CD8-positive, alpha-beta T cell (primary cell): ENCODE measurements at regions of chr11 and their contacts with region 1.

Region 1: DNA sequence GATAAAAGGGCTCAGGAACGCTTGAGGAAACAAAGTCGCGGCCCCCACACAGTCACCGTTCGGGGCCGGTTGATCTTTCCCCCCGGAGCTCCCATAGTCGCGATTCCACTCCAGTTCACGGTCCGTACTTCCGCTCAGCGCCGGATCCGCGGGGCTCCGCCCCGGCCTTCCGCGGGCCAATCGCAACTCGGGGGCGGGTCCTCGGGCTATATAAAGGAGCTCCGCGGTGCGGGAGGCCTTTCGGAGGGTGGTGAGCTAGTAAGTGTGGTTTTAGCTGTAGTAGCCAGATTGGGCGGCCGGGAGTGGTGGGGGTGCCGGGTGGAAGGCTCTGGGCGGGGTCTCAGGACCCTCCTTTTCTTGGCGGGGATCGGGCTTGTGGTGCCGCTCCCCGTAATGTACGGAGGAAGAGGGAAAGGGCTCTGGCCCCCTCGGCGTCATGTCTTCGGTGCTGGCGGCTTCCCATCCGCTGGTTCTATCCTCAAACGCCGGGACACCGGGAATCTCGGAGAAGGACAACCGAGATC is at the starts of genes C11orf98 and CSKMT:
- DNase-seq: peak; percentile 92 to 98 (median 95)
- ATAC-seq: peak; percentile 87
- H3K4me3 ChIP-seq: peak within 1 kb of the TSS; percentile 95 to 97
- H3K4me3 Mint-ChIP-seq: peak within 1 kb of the TSS; percentile 96
- H3K27ac ChIP-seq: peak within 1 kb of the TSS; percentile 81 to 92
- H3K27ac Mint-ChIP-seq: peak within 1 kb of the TSS; percentile 93
- H3K4me1 ChIP-seq: peaks cover 31% of the 10 kb centered on the region
- H3K4me1 Mint-ChIP-seq: peaks cover 45% of the 10 kb centered on the region
- H3K27me3 ChIP-seq: no peaks in the 10 kb centered on the region
- H3K27me3 Mint-ChIP-seq: no peaks in the 10 kb centered on the region
- CTCF ChIP-seq: no peak
- total RNA-seq, gene C11orf98: 22.5 to 25.7 TPM
- total RNA-seq, gene CSKMT: 25.4 to 25.7 TPM

Region 2: DNA sequence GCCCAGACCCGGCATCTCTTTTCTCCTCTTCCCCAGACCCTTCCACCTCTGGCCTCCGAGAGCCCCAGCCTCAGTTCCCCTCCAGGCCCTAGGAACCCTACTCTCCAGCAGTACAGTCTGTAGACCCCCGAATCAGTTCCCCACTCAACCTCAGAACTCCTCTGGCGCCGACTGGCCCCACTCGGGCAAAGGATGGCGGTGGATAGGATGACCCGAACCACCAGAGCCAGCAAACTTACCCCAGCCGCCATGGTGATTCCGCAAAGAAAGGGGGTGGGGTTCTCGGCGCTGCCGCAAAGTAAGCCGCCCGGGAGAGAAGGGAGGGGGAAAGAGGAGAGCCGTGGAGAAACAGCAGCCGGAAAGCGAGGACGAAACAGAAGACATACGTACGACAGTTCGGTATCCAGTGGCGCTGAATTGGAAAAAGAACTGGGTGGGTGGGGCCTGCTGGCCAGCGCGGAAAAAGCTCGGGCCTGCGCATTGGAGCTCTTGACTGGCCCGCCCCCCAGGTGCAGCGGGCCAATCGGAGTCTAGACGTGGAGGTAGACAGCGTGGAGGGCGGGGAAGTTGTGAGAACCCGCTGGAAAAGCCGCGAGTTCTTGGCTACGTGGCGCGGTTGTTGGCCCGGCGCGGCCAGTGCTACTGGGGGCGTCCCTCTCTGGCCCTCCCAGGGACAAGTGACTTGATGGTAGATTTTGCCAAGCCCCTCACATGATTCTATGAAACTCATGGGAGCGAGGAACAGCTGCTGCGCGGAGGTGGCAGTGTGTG is 91.4 kb before region 1 on chr11 and contains the start of gene EEF1G:
- CTCF ChIA-PET with region 1: no interaction called
- POLR2A ChIA-PET with region 1: interaction called, 15 read pairs
- intact Hi-C with region 1: loop called in 1 of 2 experiments (anchors 5 kb)
- DNase-seq: peak; percentile 95 to 100 (median 97)
- ATAC-seq: peak; percentile 94
- H3K4me3 ChIP-seq: peak within 1 kb of the TSS; percentile 97 to 99
- H3K4me3 Mint-ChIP-seq: peak within 1 kb of the TSS; percentile 97
- H3K27ac ChIP-seq: peak within 1 kb of the TSS; percentile 85
- H3K27ac Mint-ChIP-seq: peak within 1 kb of the TSS; percentile 90
- H3K4me1 ChIP-seq: peaks cover 28% of the 10 kb centered on the region
- H3K4me1 Mint-ChIP-seq: peaks cover 55% of the 10 kb centered on the region
- H3K27me3 ChIP-seq: no peaks in the 10 kb centered on the region
- H3K27me3 Mint-ChIP-seq: no peaks in the 10 kb centered on the region
- CTCF ChIP-seq: no peak
- total RNA-seq, gene EEF1G: 2,174 to 2,204 TPM

Region 3: DNA sequence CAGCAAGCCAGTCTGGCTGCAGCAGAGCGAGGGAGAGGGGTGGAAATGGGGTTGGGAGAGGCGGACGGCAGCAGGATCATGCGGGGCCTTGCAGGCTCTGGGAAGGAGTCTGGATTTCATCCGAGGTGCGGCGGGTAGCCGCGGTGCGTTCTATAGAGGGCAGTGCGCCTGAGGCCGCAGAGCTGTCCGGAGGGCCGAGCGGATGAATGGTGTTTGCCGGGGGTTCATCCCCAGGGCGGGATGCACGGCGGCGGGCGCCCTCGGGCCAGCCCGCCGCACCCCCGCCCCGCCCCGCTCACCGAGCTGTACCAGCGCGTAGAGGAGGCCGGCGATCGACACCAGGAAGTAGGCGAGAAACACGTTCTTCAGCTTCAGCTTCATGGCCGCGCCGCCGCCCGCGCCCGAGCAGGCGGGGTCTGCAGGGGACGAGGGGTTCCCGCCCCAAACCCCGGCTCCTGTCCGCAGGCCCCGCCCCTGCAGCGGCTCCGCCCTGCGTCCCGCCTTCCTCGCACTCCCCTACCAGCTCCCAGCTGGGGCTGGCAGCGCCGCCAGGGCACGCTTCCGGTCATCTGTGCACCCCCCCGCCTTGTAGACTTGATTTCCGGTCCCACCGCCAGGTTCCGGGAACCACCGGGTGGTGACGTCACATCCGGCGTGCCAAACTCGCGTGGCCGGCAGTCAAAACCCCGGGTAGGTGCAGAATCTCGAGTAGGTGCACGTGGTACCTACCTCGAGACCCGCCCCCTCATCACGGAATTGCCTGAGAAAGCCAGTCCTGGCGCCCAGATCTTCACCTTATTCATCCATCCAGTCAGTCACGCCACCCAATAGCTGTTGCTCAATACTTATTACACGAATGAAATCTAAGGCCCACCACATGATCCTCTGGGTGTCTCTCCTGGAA is 43.3 kb before region 1 on chr11 and contains the start of gene B3GAT3:
- CTCF ChIA-PET with region 1: interaction called, 3 read pairs
- POLR2A ChIA-PET with region 1: interaction called, 39 read pairs
- intact Hi-C with region 1: loop called (anchors 1 kb)
- DNase-seq: peak; percentile 90 to 99 (median 97)
- ATAC-seq: peak; percentile 81
- H3K4me3 ChIP-seq: peak within 1 kb of the TSS; percentile 69 to 80
- H3K4me3 Mint-ChIP-seq: peak within 1 kb of the TSS; percentile 98
- H3K27ac ChIP-seq: peak within 1 kb of the TSS; percentile 78 to 88
- H3K27ac Mint-ChIP-seq: peak within 1 kb of the TSS; percentile 97
- H3K4me1 ChIP-seq: peaks cover 20% of the 10 kb centered on the region
- H3K4me1 Mint-ChIP-seq: peaks cover 30% of the 10 kb centered on the region
- H3K27me3 ChIP-seq: no peaks in the 10 kb centered on the region
- H3K27me3 Mint-ChIP-seq: no peaks in the 10 kb centered on the region
- CTCF ChIP-seq: no peak
- total RNA-seq, gene B3GAT3: 41.7 to 44.0 TPM

Region 4: DNA sequence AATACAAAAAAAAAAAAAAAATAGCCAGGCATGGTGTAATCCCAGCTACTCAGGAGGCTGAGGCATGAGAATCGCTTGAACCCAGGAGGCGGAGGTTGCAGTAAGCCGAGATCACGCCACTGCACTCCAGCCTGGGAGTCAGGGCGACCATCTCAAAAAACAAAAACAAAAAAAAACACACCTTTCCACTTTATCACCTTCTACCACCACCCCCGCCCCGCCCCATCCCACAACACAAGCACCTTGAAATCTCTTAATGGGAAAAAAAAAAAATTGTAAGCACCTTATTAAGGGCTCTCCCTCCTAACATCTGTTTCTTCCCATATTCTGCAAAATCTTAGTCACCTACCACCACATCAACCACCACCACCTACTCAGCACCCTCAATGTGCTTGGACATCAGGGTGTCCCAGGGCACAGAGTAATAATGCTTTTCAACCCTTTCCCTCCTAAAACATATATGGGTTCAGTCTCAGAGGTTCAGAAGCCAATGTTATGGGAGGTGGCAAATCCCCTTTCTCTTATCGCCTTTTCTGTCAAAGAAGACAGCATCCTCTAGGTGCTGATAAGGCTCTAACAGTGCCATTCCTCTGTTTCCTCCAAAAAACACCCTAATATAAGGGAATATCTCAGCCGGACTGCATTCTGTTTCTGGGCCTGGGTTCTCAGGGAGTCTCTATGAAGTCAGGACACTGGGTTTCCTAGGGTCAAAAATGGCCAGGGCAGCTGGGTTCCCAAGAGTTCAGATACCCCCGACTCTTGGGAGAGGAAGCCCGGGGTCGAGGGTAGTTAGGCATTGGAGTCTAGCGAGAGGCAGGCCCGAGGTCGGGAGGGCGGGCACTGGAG is 12.8 kb before region 1 on chr11:
- CTCF ChIA-PET with region 1: interaction called, 24 read pairs
- POLR2A ChIA-PET with region 1: interaction called, 51 read pairs
- intact Hi-C with region 1: loop called (anchors 1 kb)
- DNase-seq: peak in 3 of 9 experiments; percentile 26 to 50 (median 46)
- ATAC-seq: peak; percentile 10
- H3K4me3 ChIP-seq: peak overlapping the region; percentile 84 to 90
- H3K4me3 Mint-ChIP-seq: peak overlapping the region; percentile 91
- H3K27ac ChIP-seq: peak overlapping the region; percentile 81 to 91
- H3K27ac Mint-ChIP-seq: peak overlapping the region; percentile 94
- H3K4me1 ChIP-seq: peaks cover 14% of the 10 kb centered on the region
- H3K4me1 Mint-ChIP-seq: peaks cover 18% of the 10 kb centered on the region
- H3K27me3 ChIP-seq: no peaks in the 10 kb centered on the region
- H3K27me3 Mint-ChIP-seq: no peaks in the 10 kb centered on the region
- CTCF ChIP-seq: no peak

Region 5: GRCh38 chr11:62726915-62727763 is 62.0 kb after region 1 on chr11 and contains the start of gene HNRNPUL2:
- CTCF ChIA-PET with region 1: no interaction called
- POLR2A ChIA-PET with region 1: interaction called, 22 read pairs
- intact Hi-C with region 1: loop called in 1 of 2 experiments (anchors 2 kb)
- DNase-seq: peak; percentile 96 to 100 (median 99)
- ATAC-seq: peak; percentile 85
- H3K4me3 ChIP-seq: peak within 1 kb of the TSS; percentile 77 to 81
- H3K4me3 Mint-ChIP-seq: peak within 1 kb of the TSS; percentile 96
- H3K27ac ChIP-seq: peak within 1 kb of the TSS; percentile 82 to 91
- H3K27ac Mint-ChIP-seq: peak within 1 kb of the TSS; percentile 98
- H3K4me1 ChIP-seq: peaks cover 46% of the 10 kb centered on the region
- H3K4me1 Mint-ChIP-seq: peaks cover 57% of the 10 kb centered on the region
- H3K27me3 ChIP-seq: no peaks in the 10 kb centered on the region
- H3K27me3 Mint-ChIP-seq: no peaks in the 10 kb centered on the region
- CTCF ChIP-seq: no peak
- total RNA-seq, gene HNRNPUL2: 29.6 to 31.5 TPM

Region 6: GRCh38 chr11:62855571-62856332 is 190.6 kb after region 1 on chr11:
- CTCF ChIA-PET with region 1: interaction called, 3 read pairs
- POLR2A ChIA-PET with region 1: interaction called, 14 read pairs
- intact Hi-C with region 1: no loop called
- DNase-seq: peak; percentile 96 to 100 (median 98)
- ATAC-seq: peak; percentile 91
- H3K4me3 ChIP-seq: peak overlapping the region; percentile 82 to 89
- H3K4me3 Mint-ChIP-seq: peak overlapping the region; percentile 96
- H3K27ac ChIP-seq: peak overlapping the region; percentile 76 to 84
- H3K27ac Mint-ChIP-seq: peak overlapping the region; percentile 91
- H3K4me1 ChIP-seq: peaks cover 36% of the 10 kb centered on the region
- H3K4me1 Mint-ChIP-seq: peaks cover 56% of the 10 kb centered on the region
- H3K27me3 ChIP-seq: no peaks in the 10 kb centered on the region
- H3K27me3 Mint-ChIP-seq: no peaks in the 10 kb centered on the region
- CTCF ChIP-seq: no peak